Right ventricle myocardium inferior (tissue), 1 donor: ENCODE measurements at regions of chrX and their contacts with region 1.

Region 1: DNA sequence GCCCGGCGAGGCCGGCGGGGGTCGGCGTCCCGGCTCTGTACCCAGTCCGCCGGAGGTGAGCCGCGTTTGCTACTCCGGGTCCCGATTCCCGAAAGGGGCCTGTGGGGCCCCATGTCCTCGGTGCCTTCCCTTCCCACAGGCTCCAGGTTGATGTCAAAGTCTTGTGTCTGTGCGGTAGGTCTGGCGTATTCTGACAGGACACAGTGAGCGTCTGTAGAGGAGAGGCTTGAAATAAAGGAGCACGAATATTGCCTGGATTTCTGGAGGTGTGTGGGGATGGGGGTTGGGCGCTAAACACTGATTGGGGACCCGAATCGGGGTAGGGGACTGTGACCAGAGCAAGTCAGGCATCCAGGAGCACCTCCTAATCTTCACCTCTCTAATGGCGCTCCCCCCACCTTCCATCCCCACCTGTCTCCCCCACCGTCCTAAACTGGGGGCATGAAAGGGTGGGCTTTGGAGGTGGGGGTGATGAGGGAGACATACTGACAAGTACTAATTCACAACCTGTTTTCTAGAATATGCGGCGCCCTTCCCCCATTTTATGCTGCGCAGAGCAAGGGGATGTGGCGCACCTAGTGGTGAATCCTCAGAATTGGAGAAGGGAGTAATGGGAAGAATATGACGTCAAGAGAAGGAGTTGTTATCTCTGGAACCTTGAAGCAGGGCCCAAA is 841 bp downstream of the GPRASP2 start:
- DNase-seq: peak; percentile 67
- ATAC-seq: peak; percentile 89

Region 2: DNA sequence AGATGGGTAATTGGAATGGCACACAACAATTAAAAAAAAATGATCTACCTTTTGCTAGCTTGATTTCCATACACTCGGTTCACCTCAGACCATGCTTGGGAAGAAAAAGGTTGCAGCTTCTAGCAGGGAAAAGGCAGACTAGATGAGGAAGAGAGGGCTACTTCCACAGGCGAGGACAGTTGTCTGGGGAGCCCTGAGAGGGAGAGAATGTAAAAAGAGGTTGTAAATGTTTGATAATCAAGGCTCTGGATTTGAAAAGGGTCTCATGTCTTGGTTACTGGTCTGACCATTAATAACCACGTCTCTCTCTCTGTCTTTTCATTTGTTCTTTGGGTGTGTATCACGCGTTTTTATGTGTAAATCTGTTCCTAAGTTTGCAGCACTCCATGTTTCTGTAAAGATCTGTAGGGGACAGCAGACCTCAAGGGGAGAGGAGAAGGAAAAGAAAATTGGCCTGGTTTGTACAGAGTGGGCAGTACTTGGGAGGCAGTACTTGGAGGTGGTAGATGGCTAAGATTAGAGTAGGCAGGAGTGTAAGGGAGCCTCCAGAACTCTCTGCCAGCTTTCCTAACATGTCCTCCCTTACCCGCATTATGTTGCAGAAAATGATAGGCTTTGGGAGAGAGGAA is 113.0 kb before region 1 on chrX:
- intact Hi-C with region 1: loop called (anchors 5 kb)
- DNase-seq: no peak
- ATAC-seq: no peak

Region 3: GRCh38 chrX:102659790-102660757 is 53.0 kb before region 1 on chrX:
- intact Hi-C with region 1: loop called (anchors 10 kb)
- DNase-seq: peak; percentile 91
- ATAC-seq: peak; percentile 98

Region 4: GRCh38 chrX:103565752-103566151 is 852.7 kb after region 1 on chrX:
- intact Hi-C with region 1: no loop called
- DNase-seq: no peak
- ATAC-seq: no peak